ENCODE measurements at regions of chr2 and their contacts with region 1.

Region 1: GRCh38 chr2:16756831-16757644 is 91.4 kb upstream of the CYRIA start:
- DNase-seq: peak; percentile 54 to 63
- ATAC-seq: peak; percentile 82 to 95
- H3K4me3 ChIP-seq: no peak overlapping the region
- H3K27ac ChIP-seq: peak overlapping the region in 3 of 4 donors; percentile 28 to 57 (median 56)
- H3K4me1 ChIP-seq: no peaks in the 10 kb centered on the region
- H3K27me3 ChIP-seq: no peaks in the 10 kb centered on the region
- CTCF ChIP-seq: peak; percentile 91 to 96 (median 94)
- POLR2A ChIP-seq: no peak

Region 2: GRCh38 chr2:15636972-15637785 is 1119.9 kb before region 1 on chr2:
- in situ Hi-C with region 1: loop called in 3 of 4 experiments (anchors 25 kb)
- intact Hi-C with region 1: loop called (anchors 5 kb)
- DNase-seq: peak; percentile 28 to 39
- ATAC-seq: peak; percentile 89 to 90
- H3K4me3 ChIP-seq: no peak overlapping the region
- H3K27ac ChIP-seq: peak overlapping the region in 1 of 4 donors; percentile 10
- H3K4me1 ChIP-seq: peaks cover 7 to 20% of the 10 kb centered on the region in 2 donors
- H3K27me3 ChIP-seq: no peaks in the 10 kb centered on the region
- CTCF ChIP-seq: peak; percentile 76 to 83 (median 78)
- POLR2A ChIP-seq: no peak

Region 3: GRCh38 chr2:16525265-16525887 is 231.7 kb before region 1 on chr2:
- in situ Hi-C with region 1: no loop called
- intact Hi-C with region 1: loop called (anchors 1 kb)
- DNase-seq: peak in 1 of 2 donors; percentile 18
- ATAC-seq: peak in 1 of 2 donors; percentile 39
- H3K4me3 ChIP-seq: no peak overlapping the region
- H3K27ac ChIP-seq: no peak overlapping the region
- H3K4me1 ChIP-seq: peaks cover 0 to 7% of the 10 kb centered on the region in 2 donors
- H3K27me3 ChIP-seq: no peaks in the 10 kb centered on the region
- CTCF ChIP-seq: peak in 4 of 5 experiments; percentile 39 to 51 (median 46)
- POLR2A ChIP-seq: no peak

Region 4: DNA sequence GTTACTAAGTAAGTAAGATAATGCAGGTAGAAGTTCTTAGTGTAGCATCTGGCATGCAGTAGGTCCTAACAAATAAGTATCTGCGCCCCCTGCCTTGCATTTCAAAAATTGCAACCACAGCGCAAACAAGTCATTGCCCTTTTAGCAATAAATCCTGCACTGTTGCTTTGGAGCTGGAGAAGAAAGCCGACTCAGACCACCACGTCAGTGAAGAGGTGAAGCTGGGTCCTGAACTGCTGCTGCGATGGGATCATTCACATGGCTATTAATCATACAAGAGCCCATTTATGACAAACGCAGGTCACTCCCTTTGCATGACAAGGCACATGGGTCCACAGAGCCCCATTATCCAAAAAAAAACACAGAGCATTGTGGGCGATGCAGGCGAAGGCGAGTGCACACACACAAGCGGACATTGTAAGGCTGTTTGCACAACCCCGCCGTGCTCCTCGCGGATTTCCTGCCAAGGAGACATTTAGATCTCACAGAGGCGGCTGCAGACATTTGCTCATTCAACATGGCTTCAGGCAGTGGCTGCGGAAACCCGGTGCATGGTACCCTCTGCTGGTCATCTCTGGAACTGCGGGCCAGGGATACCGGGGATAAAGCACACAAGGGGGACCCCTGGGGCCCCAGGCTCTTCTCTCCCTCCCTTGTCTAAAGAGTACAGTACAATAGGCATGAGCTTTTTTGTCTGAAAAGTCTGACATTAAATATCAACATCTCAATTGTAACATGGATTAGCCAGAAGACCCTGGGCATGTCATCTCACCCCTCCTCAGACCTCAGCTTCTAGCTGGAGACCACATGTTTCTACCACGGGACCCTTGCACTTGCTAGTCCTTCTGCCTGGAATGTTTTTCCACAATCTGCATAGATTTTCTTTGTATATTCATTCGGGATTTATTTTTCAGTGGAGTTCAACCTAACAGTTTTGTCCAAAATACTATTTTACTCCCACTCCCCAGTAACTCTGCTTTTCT is 148.1 kb before region 1 on chr2:
- in situ Hi-C with region 1: loop called in 1 of 4 experiments (anchors 5 kb)
- intact Hi-C with region 1: loop called (anchors 1 kb)
- DNase-seq: peak; percentile 61 to 75
- ATAC-seq: peak; percentile 80 to 88
- H3K4me3 ChIP-seq: peak overlapping the region; percentile 34 to 60 (median 46)
- H3K27ac ChIP-seq: peak overlapping the region in 2 of 4 donors; percentile 15 to 46
- H3K4me1 ChIP-seq: peaks cover 8 to 16% of the 10 kb centered on the region in 2 donors
- H3K27me3 ChIP-seq: no peaks in the 10 kb centered on the region
- CTCF ChIP-seq: peak; percentile 87 to 94 (median 93)
- POLR2A ChIP-seq: no peak

Region 5: GRCh38 chr2:16625201-16625729 is 131.8 kb before region 1 on chr2:
- in situ Hi-C with region 1: loop called in 2 of 4 experiments (anchors 5 kb)
- intact Hi-C with region 1: no loop called
- DNase-seq: peak in 1 of 2 donors; percentile 55
- ATAC-seq: peak; percentile 33 to 51
- H3K4me3 ChIP-seq: no peak overlapping the region
- H3K27ac ChIP-seq: peak overlapping the region; percentile 44 to 81 (median 65)
- H3K4me1 ChIP-seq: peaks cover 47 to 73% of the 10 kb centered on the region in 2 donors
- H3K27me3 ChIP-seq: no peaks in the 10 kb centered on the region
- CTCF ChIP-seq: no peak
- POLR2A ChIP-seq: no peak

Region 6: DNA sequence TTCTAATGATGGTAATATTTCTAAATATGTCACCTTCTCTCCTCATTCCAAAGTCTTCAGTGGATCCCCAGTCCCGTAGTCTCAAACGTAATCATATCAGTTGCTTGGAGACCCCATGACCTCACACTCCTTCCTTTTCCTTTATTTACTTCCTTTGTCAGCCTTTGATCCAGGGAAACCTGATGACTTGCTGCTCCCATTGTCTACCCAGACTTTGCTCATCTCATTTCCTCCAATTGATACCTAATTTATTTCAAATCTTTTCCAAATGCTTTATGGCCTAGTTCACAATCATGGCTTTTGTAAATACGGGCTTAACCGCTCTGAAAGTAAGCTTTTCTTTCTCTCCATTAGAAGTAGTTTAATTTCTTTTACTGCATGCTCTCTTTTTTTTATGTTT is 311.0 kb after region 1 on chr2:
- in situ Hi-C with region 1: no loop called
- intact Hi-C with region 1: no loop called
- DNase-seq: no peak
- ATAC-seq: no peak
- H3K4me3 ChIP-seq: no peak overlapping the region
- H3K27ac ChIP-seq: no peak overlapping the region
- H3K4me1 ChIP-seq: no peaks in the 10 kb centered on the region
- H3K27me3 ChIP-seq: no peaks in the 10 kb centered on the region
- CTCF ChIP-seq: no peak
- POLR2A ChIP-seq: no peak

Measured in gastrocnemius medialis (tissue), 4 donors.